ENCODE measurements at regions of chr16 and their contacts with region 1.

Region 1: DNA sequence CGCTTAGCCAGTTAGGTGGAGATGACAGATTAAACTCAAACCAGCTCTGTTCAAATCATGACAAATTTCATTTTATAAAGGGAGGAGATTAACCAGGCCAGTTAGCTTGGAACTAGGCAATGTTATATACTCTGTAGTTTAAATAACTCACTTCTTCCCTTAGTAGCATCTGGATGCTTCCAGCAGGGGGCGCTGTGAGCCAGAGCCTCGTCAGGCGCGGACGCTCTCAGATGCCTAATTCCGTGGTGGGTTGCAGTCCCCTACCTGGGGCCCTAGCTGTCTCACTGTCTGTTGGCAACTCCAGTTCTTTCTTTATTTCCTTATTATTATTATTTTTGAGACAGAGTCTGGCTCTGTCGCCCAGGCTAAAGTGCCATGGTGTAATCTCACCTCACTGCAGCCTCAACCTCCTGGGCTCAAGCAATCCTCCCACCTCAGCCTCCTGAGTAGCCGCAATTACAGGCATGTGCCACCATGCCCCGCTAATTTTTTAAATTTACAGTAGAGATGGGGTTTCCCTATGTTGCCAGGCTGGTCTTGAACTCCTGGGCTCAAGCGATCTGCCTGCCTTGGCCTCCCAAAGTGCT is 17.3 kb upstream of the WFDC1 start:
- DNase-seq: peak; percentile 79
- H3K4me3 ChIP-seq: peak overlapping the region in 1 of 2 experiments; percentile 49; a peak in 1 of 4 replicates
- H3K27ac ChIP-seq: no peak overlapping the region
- H3K4me1 ChIP-seq: no peaks in the 10 kb centered on the region; a peak in 1 of 4 replicates
- H3K27me3 ChIP-seq: no peaks in the 10 kb centered on the region
- CTCF ChIP-seq: peak; percentile 92
- EP300 ChIP-seq: no peak
- RAD21 ChIP-seq: peak; percentile 79

Region 2: DNA sequence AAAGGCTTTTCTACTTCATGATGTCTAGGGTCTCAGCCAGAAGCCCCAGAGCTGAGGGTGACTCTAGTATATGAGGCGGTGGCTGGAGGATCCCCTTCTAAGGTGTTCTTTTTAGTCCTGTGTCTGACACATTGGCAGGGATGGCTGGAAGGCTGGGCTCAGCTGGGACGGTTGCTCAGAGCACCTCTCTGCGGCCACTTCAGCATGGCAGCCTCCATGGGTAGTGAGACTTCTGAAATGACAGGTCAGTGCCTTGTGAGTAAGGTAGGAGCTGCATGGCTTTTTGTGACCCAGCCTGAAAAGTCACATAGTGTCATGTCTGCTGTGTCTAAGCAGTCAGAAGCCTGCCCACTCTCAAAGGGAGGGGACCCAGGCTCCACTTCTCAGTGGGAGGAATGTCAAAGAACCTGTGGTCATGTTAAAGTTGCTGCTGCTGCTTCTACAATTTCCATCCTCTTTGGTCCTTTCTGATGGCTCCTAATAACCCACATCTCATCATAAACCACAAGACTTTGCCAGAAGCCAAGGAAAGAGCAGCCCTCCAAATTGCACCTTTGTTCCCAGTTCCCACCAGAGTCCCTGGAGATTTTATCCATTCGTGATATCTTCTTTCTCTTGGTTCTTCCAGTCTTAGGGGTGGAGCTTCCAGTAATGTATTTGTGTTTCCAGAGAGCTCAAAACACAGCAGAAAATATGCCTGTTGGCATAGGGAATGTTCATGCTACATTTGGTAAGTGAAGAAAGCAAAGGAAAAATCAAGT is 22.1 kb before region 1 on chr16:
- CTCF ChIA-PET with region 1: interaction called, 18 read pairs
- POLR2A ChIA-PET with region 1: no interaction called
- DNase-seq: no peak
- H3K4me3 ChIP-seq: no peak overlapping the region
- H3K27ac ChIP-seq: no peak overlapping the region
- H3K4me1 ChIP-seq: no peaks in the 10 kb centered on the region
- H3K27me3 ChIP-seq: peaks cover 31% of the 10 kb centered on the region; the same call in 1 of the 2 replicates
- CTCF ChIP-seq: no peak
- EP300 ChIP-seq: no peak
- RAD21 ChIP-seq: no peak

Region 3: GRCh38 chr16:84266451-84266850 is 10.9 kb before region 1 on chr16:
- CTCF ChIA-PET with region 1: interaction called, 49 read pairs
- POLR2A ChIA-PET with region 1: no interaction called
- DNase-seq: peak; percentile 85
- H3K4me3 ChIP-seq: no peak overlapping the region
- H3K27ac ChIP-seq: no peak overlapping the region
- H3K4me1 ChIP-seq: peaks cover 0 to 4% of the 10 kb centered on the region in 2 experiments; a peak in 1 of 4 replicates
- H3K27me3 ChIP-seq: no peaks in the 10 kb centered on the region; the same call in 1 of the 2 replicates
- CTCF ChIP-seq: no peak
- EP300 ChIP-seq: no peak
- RAD21 ChIP-seq: no peak

Region 4: DNA sequence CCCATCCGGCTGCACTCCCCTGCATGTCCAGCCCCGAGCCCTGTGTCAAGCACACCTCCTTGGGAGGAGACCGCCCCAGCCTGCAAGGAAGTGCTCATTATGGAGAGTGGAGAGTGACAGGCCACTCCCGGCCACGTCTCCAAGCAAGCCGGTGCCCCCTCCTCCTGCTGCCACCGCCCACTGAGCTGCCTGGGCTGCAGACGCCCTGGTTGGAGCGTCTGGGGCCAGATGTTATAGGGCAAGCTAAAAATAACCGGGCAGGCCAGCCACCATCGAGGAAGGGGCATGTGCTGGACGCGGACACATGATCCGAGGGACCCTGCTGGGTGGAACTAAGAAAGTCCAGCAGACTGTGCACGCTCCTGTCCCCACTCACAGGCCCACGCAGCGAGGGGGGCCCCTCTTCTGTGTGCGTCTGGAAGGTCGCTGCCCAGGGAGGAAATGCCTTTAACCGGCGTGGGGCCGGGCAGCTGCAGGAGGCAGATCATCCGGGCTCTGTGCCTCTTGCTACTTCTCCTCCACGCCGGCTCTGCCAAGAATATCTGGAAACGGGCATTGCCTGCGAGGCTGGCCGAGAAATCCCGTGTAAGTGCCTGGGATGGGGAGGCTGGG is 17.3 kb after region 1 on chr16 and contains the start of gene WFDC1:
- CTCF ChIA-PET with region 1: interaction called, 13 read pairs
- POLR2A ChIA-PET with region 1: no interaction called
- DNase-seq: peak; percentile 68
- H3K4me3 ChIP-seq: peak within 1 kb of the TSS; percentile 8 to 32; a peak in 1 of 4 replicates
- H3K27ac ChIP-seq: no peak within 1 kb of the TSS
- H3K4me1 ChIP-seq: peaks cover 6 to 12% of the 10 kb centered on the region in 2 experiments; a peak in 2 of 4 replicates
- H3K27me3 ChIP-seq: peaks cover 6% of the 10 kb centered on the region
- CTCF ChIP-seq: no peak
- EP300 ChIP-seq: no peak
- RAD21 ChIP-seq: no peak
- polyA plus RNA-seq, gene WFDC1: 0.03 and 0.23 TPM in 2 replicates

Region 5: DNA sequence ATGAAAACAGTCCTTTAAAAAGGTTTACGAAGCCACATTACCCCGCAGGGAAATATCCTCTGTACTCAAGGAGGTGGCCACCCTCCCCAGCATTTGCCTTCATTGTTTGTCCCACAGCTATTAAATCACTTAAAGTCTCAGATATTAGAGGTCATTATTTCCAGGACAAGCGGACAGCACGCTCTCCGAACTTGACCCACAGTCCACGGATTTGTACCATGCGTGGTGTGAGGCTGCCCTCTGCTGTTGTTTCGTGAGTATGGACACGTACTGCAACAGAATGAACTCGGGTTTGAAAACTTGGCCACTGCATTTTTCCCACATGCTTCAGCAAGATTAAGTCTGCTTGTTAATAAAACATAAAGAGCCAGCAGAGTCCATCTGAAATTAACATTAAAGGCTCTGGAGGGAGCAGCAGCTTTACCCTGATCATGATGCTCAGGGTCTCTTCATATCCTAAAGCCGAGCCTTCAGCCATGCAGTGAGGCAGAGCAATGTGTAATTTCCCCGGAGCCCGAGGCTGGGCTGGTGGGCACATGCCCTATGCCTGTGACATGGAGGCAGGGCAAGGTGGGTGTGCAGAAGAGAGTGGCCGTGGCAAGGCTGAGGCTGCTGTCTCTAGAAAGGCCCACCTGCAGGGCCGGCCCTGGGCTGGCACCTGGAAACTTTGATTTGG is 207.4 kb after region 1 on chr16:
- CTCF ChIA-PET with region 1: interaction called, 67 read pairs
- POLR2A ChIA-PET with region 1: no interaction called
- DNase-seq: peak; percentile 77
- H3K4me3 ChIP-seq: no peak overlapping the region; a peak in 1 of 4 replicates
- H3K27ac ChIP-seq: no peak overlapping the region
- H3K4me1 ChIP-seq: no peaks in the 10 kb centered on the region; a peak in 1 of 4 replicates
- H3K27me3 ChIP-seq: no peaks in the 10 kb centered on the region
- CTCF ChIP-seq: peak; percentile 79
- EP300 ChIP-seq: no peak
- RAD21 ChIP-seq: peak; percentile 94

Measured in SK-N-SH (cell line).